ENCODE measurements at regions of chr14 and their contacts with region 1.

Region 1: DNA sequence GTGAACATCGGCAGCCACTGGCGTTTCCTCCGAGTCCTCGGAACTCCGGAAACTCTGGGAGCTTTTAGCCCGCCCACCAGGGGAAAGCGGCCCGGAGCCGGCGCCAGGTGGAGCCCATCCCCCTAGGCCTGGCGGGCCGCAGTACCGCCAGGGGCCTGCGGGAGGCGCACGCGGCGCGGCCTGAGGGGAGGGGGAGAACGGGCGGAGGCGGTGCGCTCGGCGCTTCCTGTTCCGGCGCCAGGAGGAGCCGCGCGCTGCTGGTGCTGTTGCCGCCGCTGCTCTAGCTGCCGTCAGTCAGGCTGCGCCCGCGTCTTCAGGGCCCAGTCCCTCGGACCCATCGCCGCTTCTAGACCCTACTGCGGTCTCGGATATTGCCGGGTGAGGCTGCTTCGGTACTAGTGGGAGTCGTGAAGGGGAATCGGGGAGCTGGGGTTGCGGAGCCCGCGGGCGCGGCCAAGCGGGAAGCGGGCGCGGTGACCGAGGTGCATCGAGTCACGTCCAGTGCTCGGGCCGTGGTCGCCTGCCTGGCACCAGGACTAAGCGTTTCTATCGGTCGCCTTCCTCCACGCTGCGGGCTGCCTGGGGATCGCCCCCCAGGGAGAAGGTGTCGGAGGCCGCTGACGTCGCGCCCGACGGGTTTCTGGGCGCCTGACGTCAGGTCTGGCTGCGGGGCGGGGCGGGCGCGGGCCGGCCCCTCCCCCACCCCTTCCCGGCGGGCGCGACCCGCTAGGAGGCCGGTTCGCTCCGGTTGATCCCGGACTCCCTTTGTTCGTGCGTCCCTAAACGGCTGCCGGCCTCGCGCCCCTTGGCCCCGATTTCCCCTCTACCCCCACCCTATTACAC is at the start of gene MAPK1IP1L:
- DNase-seq: peak; percentile 95
- ATAC-seq: peak; percentile 94
- H3K4me3 Mint-ChIP-seq: peak within 1 kb of the TSS; percentile 82
- H3K27ac Mint-ChIP-seq: peak within 1 kb of the TSS; percentile 96
- H3K4me1 Mint-ChIP-seq: peaks cover 33% of the 10 kb centered on the region
- H3K27me3 Mint-ChIP-seq: no peaks in the 10 kb centered on the region
- total RNA-seq, gene MAPK1IP1L: 98.6 to 180 TPM

Region 2: DNA sequence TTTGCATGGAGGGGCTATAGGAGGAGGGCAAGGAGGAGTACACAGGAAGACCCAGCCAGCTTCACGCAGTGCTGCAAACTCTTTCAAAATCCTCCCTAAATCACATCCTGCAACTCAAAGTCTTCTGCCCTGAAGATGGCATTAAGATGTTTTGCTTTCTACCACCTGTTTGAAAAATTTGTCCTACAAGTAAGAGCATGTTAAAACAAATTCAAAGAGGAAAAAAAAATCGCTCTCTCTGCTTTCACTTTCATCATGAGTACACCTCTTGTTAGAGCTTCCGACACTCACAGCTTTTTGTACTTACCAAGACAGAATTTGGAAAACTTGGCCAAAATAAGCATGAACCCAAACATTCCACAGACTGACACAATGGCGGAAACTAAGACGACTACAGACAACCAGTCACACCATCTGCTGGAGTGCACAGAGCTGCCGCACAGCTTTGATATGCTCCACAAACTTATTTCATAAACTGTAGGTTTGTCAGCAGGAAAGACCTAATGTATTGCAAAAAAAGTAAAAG is 170.3 kb before region 1 on chr14:
- CTCF ChIA-PET with region 1: no interaction called
- POLR2A ChIA-PET with region 1: no interaction called
- intact Hi-C with region 1: no loop called
- DNase-seq: peak; percentile 34
- ATAC-seq: peak; percentile 71
- H3K4me3 Mint-ChIP-seq: peak overlapping the region; percentile 83
- H3K27ac Mint-ChIP-seq: peak overlapping the region; percentile 100
- H3K4me1 Mint-ChIP-seq: peaks cover 39% of the 10 kb centered on the region
- H3K27me3 Mint-ChIP-seq: no peaks in the 10 kb centered on the region

Region 3: DNA sequence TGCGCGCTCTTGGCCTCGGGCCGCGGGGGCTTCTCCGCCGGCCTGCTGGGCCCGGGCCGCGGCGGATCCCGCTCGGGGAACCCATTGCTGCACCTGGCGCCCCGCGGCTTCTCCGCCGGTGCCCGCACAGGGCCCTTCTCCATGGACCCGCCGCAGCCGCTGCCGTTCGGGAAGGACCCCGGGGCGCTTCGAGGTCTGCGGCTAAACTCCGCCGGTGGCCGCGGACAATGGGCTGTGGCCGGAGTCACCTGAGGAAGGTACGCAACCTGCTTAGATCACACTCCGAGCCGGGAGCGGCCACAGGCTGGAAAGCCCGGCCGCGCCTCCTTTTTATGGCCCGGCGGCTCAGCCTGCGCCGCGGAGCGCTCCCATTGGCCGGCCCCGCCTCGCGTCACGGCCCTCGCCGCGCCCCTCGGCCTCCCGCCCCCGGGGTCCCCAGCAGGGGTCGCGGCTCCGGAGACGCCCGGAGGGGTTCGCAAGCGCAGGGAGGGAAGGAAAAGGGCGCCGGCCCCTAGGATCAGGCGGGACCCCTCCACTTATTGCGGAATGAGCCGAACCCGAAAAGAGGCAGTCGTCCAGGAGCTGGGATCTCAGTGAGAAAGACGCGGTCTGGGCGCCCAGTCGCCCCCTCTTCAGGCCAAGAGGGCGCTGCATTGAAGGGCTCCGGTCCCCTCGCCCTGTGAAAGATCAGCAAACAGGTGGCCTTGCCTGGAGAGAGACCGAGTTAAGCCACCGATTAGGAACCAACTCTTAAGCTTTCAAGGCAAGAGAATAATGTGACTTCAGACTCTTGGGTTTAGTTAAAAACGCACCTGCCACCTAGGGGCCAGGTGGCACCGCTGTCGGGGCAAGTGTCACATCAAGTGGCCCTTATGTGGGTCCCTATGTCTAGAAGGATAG is 148.9 kb before region 1 on chr14 and contains the start of gene GCH1:
- CTCF ChIA-PET with region 1: interaction called, 3 read pairs
- POLR2A ChIA-PET with region 1: no interaction called
- intact Hi-C with region 1: loop called (anchors 1 to 10 kb)
- DNase-seq: peak; percentile 81
- ATAC-seq: peak; percentile 80
- H3K4me3 Mint-ChIP-seq: peak within 1 kb of the TSS; percentile 88
- H3K27ac Mint-ChIP-seq: peak within 1 kb of the TSS; percentile 90
- H3K4me1 Mint-ChIP-seq: peaks cover 26% of the 10 kb centered on the region
- H3K27me3 Mint-ChIP-seq: no peaks in the 10 kb centered on the region
- total RNA-seq, gene GCH1: 28.1 to 36.4 TPM

Region 4: GRCh38 chr14:55038708-55039107 is 12.9 kb before region 1 on chr14:
- CTCF ChIA-PET with region 1: interaction called, 46 read pairs
- POLR2A ChIA-PET with region 1: interaction called, 4 read pairs
- intact Hi-C with region 1: no loop called
- DNase-seq: no peak
- ATAC-seq: peak; percentile 33
- H3K4me3 Mint-ChIP-seq: no peak overlapping the region
- H3K27ac Mint-ChIP-seq: no peak overlapping the region
- H3K4me1 Mint-ChIP-seq: peaks cover 8% of the 10 kb centered on the region
- H3K27me3 Mint-ChIP-seq: no peaks in the 10 kb centered on the region

Region 5: DNA sequence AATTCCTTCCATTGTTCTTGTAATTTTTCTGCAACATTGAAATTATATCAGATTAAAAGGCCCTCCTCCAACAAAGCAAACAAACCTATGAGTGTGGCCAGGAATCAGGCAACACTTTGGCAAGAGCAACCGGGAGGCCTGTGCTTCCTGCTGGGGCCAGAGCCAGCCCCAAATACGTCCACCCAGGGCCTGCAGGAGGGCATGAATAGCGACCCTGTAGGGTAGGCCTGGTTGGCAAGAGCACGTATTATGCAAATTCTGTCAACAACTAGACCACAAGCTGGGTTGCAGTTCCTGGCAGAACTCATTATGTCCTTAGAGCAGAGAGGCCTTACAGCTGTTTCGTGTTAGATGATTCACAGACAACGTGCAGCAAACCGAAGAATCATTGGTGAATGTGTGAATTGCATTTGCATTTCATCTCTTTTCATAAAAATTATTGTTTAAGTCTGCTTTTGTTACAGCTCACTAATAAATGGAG is 50.5 kb after region 1 on chr14:
- CTCF ChIA-PET with region 1: interaction called, 8 read pairs
- POLR2A ChIA-PET with region 1: interaction called, 3 read pairs
- intact Hi-C with region 1: loop called in 1 of 2 experiments (anchors 1 kb)
- DNase-seq: peak; percentile 72
- ATAC-seq: peak; percentile 62
- H3K4me3 Mint-ChIP-seq: peak overlapping the region; percentile 49
- H3K27ac Mint-ChIP-seq: peak overlapping the region; percentile 89
- H3K4me1 Mint-ChIP-seq: peaks cover 43% of the 10 kb centered on the region
- H3K27me3 Mint-ChIP-seq: no peaks in the 10 kb centered on the region

Region 6: GRCh38 chr14:55270832-55271565 is 219.4 kb after region 1 on chr14 and contains the start of gene FBXO34:
- CTCF ChIA-PET with region 1: no interaction called
- POLR2A ChIA-PET with region 1: no interaction called
- intact Hi-C with region 1: loop called in 1 of 2 experiments (anchors 1 kb)
- DNase-seq: peak; percentile 100
- ATAC-seq: peak; percentile 89
- H3K4me3 Mint-ChIP-seq: peak within 1 kb of the TSS; percentile 87
- H3K27ac Mint-ChIP-seq: peak within 1 kb of the TSS; percentile 93
- H3K4me1 Mint-ChIP-seq: peaks cover 39% of the 10 kb centered on the region
- H3K27me3 Mint-ChIP-seq: no peaks in the 10 kb centered on the region
- total RNA-seq, gene FBXO34: 18.5 to 18.9 TPM

Region 7: DNA sequence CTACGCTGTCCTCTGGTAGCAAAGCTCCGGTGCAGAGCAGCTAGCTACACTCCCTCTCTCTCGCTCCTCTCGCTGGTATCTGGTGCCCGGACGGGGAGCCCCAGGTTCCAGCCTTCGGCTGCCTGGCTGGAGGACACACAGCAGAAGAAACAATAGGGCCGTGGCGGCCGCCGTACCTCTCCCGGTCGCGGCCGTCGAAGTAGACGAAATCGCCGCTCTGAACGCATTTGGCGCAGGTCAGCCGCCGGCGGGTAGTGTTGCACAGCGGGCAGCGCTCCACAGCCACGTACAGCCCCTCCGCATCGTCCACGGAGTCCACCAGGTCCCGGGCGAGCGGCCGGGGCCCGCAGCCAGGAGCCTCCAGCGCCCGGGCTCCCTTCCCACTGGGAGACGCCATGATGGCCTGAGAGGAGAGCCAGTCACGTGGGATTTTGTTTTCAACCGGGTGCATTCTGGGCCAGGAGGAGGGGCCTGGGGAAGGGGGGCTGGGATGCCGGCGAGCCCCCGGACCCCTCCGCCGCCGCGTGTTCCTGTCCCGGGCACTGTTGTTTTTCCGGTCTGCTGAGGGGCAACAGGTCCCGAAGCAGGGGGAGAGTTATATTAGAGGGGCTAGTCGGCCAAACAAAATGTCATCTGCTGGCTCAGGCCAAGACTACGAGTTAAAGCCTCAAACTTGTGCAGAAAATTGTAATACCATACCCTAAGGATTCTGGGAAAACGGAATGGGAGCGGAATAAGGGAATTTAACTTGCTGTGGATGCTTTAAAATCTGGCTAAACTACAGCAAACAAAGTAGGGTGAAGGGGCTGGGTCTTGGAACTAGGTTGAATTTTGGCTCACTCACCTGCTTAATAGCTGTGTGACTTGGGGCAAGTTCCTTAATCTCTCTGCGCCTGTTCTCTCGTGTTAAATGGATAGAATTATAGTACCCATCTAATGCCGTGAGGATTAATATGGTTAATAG is 360.1 kb after region 1 on chr14 and contains the start of gene ATG14:
- CTCF ChIA-PET with region 1: no interaction called
- POLR2A ChIA-PET with region 1: no interaction called
- intact Hi-C with region 1: loop called in 1 of 2 experiments (anchors 5 kb)
- DNase-seq: peak; percentile 88
- ATAC-seq: peak; percentile 99
- H3K4me3 Mint-ChIP-seq: peak within 1 kb of the TSS; percentile 79
- H3K27ac Mint-ChIP-seq: peak within 1 kb of the TSS; percentile 82
- H3K4me1 Mint-ChIP-seq: peaks cover 27% of the 10 kb centered on the region
- H3K27me3 Mint-ChIP-seq: no peaks in the 10 kb centered on the region
- total RNA-seq, gene ATG14: 5.0 to 5.1 TPM

Measured in activated CD4-positive, alpha-beta T cell treated with anti-CD3 and anti-CD28 coated beads for 36 hours (primary cell).